B cell (primary cell): ENCODE measurements at regions of chr2 and their contacts with region 1.

Region 1: GRCh38 chr2:134253804-134254203 is at the start of gene MGAT5:
- DNase-seq: peak; percentile 85
- ATAC-seq: peak; percentile 59
- H3K4me3 ChIP-seq: peak within 1 kb of the TSS; percentile 30 to 66 (median 62)
- H3K4me3 Mint-ChIP-seq: peak within 1 kb of the TSS; percentile 72
- H3K27ac ChIP-seq: peak within 1 kb of the TSS; percentile 83 to 87
- H3K27ac Mint-ChIP-seq: peak within 1 kb of the TSS; percentile 90
- H3K4me1 ChIP-seq: peaks cover 92 to 95% of the 10 kb centered on the region in 2 donors
- H3K4me1 Mint-ChIP-seq: peaks cover 90% of the 10 kb centered on the region
- H3K27me3 ChIP-seq: no peaks in the 10 kb centered on the region
- H3K27me3 Mint-ChIP-seq: no peaks in the 10 kb centered on the region
- CTCF ChIP-seq: no peak
- total RNA-seq, gene MGAT5: 177 and 184 TPM in 2 replicates

Region 2: GRCh38 chr2:133953524-133953923 is 300.3 kb before region 1 on chr2:
- CTCF ChIA-PET with region 1: no interaction called
- POLR2A ChIA-PET with region 1: no interaction called
- intact Hi-C with region 1: loop called (anchors 5 kb)
- DNase-seq: peak; percentile 83
- ATAC-seq: peak; percentile 88
- H3K4me3 ChIP-seq: peak overlapping the region in 1 of 5 experiments; percentile 18
- H3K4me3 Mint-ChIP-seq: peak overlapping the region; percentile 64
- H3K27ac ChIP-seq: peak overlapping the region; percentile 63 to 73
- H3K27ac Mint-ChIP-seq: peak overlapping the region; percentile 85
- H3K4me1 ChIP-seq: peaks cover 75 to 76% of the 10 kb centered on the region in 2 donors
- H3K4me1 Mint-ChIP-seq: peaks cover 74% of the 10 kb centered on the region
- H3K27me3 ChIP-seq: no peaks in the 10 kb centered on the region
- H3K27me3 Mint-ChIP-seq: no peaks in the 10 kb centered on the region
- CTCF ChIP-seq: no peak

Region 3: GRCh38 chr2:134027980-134028379 is 225.8 kb before region 1 on chr2:
- CTCF ChIA-PET with region 1: no interaction called
- POLR2A ChIA-PET with region 1: no interaction called
- intact Hi-C with region 1: no loop called
- DNase-seq: no peak
- ATAC-seq: no peak
- H3K4me3 ChIP-seq: no peak overlapping the region
- H3K4me3 Mint-ChIP-seq: no peak overlapping the region
- H3K27ac ChIP-seq: no peak overlapping the region
- H3K27ac Mint-ChIP-seq: no peak overlapping the region
- H3K4me1 ChIP-seq: peaks cover 7 to 10% of the 10 kb centered on the region in 2 donors
- H3K4me1 Mint-ChIP-seq: peaks cover 19% of the 10 kb centered on the region
- H3K27me3 ChIP-seq: peaks cover 0 to 28% (median 13%) of the 10 kb centered on the region in 4 experiments
- H3K27me3 Mint-ChIP-seq: peaks cover 25% of the 10 kb centered on the region
- CTCF ChIP-seq: no peak

Region 4: DNA sequence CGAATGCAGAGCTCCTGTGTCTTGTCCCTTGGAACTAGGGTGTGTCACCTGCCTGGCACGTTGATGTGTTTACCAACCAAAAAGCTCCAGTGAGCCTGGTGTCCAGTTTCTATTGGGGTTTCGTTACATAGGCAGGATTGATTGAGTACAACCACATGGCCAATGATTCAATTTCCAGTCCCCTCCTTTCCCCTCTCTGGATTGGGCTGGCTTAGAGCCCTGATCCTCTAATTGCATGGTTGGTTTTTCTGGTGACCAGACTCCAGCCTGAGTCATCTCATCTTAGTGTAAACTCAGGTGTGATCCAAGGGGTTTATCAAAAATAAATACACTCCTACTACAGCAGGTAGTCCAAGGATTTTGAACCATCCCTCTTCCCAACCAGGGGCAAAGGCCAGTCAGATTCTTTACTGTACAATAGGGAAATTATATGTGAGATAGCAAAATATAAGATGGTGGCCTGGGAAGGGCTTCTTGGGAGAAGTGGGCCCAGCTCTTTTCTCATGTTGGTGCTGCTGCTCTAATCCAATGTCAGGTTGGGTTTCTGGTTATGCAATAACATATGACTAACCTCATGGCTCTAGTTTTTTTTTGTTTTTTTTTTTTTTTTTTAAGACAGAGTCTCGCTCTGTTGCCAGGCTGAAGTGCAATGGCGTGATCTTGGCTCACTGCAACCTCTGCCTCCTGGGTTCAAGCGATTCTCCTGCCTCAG is 64.6 kb before region 1 on chr2:
- CTCF ChIA-PET with region 1: no interaction called
- POLR2A ChIA-PET with region 1: no interaction called
- intact Hi-C with region 1: no loop called
- DNase-seq: no peak
- ATAC-seq: no peak
- H3K4me3 ChIP-seq: no peak overlapping the region
- H3K4me3 Mint-ChIP-seq: no peak overlapping the region
- H3K27ac ChIP-seq: no peak overlapping the region
- H3K27ac Mint-ChIP-seq: no peak overlapping the region
- H3K4me1 ChIP-seq: peaks cover 35 to 37% of the 10 kb centered on the region in 2 donors
- H3K4me1 Mint-ChIP-seq: peaks cover 67% of the 10 kb centered on the region
- H3K27me3 ChIP-seq: no peaks in the 10 kb centered on the region
- H3K27me3 Mint-ChIP-seq: no peaks in the 10 kb centered on the region
- CTCF ChIP-seq: no peak

Region 5: GRCh38 chr2:134218930-134219658 is 34.7 kb before region 1 on chr2:
- CTCF ChIA-PET with region 1: no interaction called
- POLR2A ChIA-PET with region 1: interaction called, 4 read pairs
- intact Hi-C with region 1: loop called (anchors 5 kb)
- DNase-seq: peak; percentile 76
- ATAC-seq: peak; percentile 60
- H3K4me3 ChIP-seq: peak overlapping the region in 2 of 5 experiments; percentile 18 to 21
- H3K4me3 Mint-ChIP-seq: peak overlapping the region; percentile 67
- H3K27ac ChIP-seq: peak overlapping the region; percentile 74 to 84
- H3K27ac Mint-ChIP-seq: peak overlapping the region; percentile 91
- H3K4me1 ChIP-seq: peaks cover 52 to 55% of the 10 kb centered on the region in 2 donors
- H3K4me1 Mint-ChIP-seq: peaks cover 77% of the 10 kb centered on the region
- H3K27me3 ChIP-seq: no peaks in the 10 kb centered on the region
- H3K27me3 Mint-ChIP-seq: no peaks in the 10 kb centered on the region
- CTCF ChIP-seq: no peak

Region 6: DNA sequence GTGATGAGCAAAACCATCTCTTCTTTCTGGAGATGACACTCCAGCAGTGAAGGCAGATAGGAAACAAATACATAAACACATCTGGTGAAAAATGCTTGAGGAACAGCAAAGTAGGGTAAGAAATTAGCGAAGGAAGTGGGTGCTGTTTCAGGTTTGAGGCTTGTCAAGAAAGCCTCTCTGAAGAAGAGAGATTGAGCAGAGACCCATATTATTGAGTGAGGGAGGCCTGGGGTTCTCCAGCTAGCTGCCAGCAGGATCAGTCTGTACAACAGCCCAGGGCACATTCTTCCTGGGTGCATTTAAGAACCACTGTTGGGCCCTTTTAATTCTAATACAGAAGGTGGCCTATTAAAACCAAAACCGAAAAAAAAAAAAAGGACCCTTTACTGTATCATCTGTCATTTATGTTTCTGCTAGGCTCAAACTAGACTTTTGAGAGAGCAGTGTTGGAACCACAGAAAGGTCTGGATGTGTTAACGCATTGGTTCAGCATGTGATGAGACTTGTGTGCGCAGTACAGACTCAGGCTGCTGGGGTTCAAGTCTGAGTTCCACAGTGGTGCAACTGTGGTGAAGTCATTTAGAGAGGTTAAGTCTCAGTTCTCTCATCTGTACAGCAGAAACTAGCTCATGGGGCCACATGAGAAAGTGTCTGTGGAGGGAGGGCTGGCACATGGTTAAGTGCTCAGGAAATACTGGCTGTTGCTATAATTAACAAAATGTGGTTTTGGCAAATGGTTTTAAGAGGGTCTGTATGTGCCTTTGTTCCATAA is 29.0 kb after region 1 on chr2:
- CTCF ChIA-PET with region 1: interaction called, 3 read pairs
- POLR2A ChIA-PET with region 1: interaction called, 12 read pairs
- intact Hi-C with region 1: no loop called
- DNase-seq: peak; percentile 56
- ATAC-seq: peak; percentile 64
- H3K4me3 ChIP-seq: peak overlapping the region in 1 of 5 experiments; percentile 40
- H3K4me3 Mint-ChIP-seq: peak overlapping the region; percentile 77
- H3K27ac ChIP-seq: peak overlapping the region; percentile 56 to 80
- H3K27ac Mint-ChIP-seq: peak overlapping the region; percentile 88
- H3K4me1 ChIP-seq: peaks cover 95 to 100% of the 10 kb centered on the region in 2 donors
- H3K4me1 Mint-ChIP-seq: peaks cover 78% of the 10 kb centered on the region
- H3K27me3 ChIP-seq: no peaks in the 10 kb centered on the region
- H3K27me3 Mint-ChIP-seq: no peaks in the 10 kb centered on the region
- CTCF ChIP-seq: no peak

Region 7: DNA sequence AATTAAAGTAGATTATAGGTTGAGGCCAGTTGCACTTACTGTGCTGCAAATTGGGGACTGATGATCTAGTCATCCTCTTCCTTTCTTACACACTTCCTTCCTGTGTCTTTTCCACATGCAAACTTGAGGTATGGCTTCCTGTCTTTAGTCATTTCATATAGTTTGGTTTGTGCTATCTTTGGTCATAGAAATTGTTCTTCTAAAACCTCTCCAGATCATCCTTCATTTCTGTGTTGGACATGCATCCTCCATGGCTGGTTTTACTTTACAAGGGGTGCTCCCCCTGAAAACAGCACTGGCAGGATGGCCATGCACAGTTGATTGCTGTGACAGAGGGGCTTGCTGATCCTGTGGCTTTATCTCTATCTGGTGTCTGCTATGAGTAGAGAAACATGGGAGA is 36.6 kb after region 1 on chr2:
- CTCF ChIA-PET with region 1: interaction called, 5 read pairs
- POLR2A ChIA-PET with region 1: interaction called, 3 read pairs
- intact Hi-C with region 1: loop called (anchors 5 kb)
- DNase-seq: no peak
- ATAC-seq: peak; percentile 24
- H3K4me3 ChIP-seq: peak overlapping the region in 3 of 5 experiments; percentile 10 to 20 (median 13)
- H3K4me3 Mint-ChIP-seq: no peak overlapping the region
- H3K27ac ChIP-seq: peak overlapping the region; percentile 62 to 95
- H3K27ac Mint-ChIP-seq: no peak overlapping the region
- H3K4me1 ChIP-seq: peaks cover 98 to 99% of the 10 kb centered on the region in 2 donors
- H3K4me1 Mint-ChIP-seq: peaks cover 28% of the 10 kb centered on the region
- H3K27me3 ChIP-seq: no peaks in the 10 kb centered on the region
- H3K27me3 Mint-ChIP-seq: no peaks in the 10 kb centered on the region
- CTCF ChIP-seq: no peak

Region 8: GRCh38 chr2:134460583-134460998 is 206.8 kb after region 1 on chr2:
- CTCF ChIA-PET with region 1: no interaction called
- POLR2A ChIA-PET with region 1: no interaction called
- intact Hi-C with region 1: no loop called
- DNase-seq: peak; percentile 59
- ATAC-seq: peak; percentile 76
- H3K4me3 ChIP-seq: no peak overlapping the region
- H3K4me3 Mint-ChIP-seq: no peak overlapping the region
- H3K27ac ChIP-seq: no peak overlapping the region
- H3K27ac Mint-ChIP-seq: peak overlapping the region; percentile 37
- H3K4me1 ChIP-seq: no peaks in the 10 kb centered on the region
- H3K4me1 Mint-ChIP-seq: peaks cover 3% of the 10 kb centered on the region
- H3K27me3 ChIP-seq: no peaks in the 10 kb centered on the region
- H3K27me3 Mint-ChIP-seq: no peaks in the 10 kb centered on the region
- CTCF ChIP-seq: peak; percentile 61